ENCODE measurements at regions of chr1 and their contacts with region 1.

Region 1: GRCh38 chr1:51372561-51372960 is 42.2 kb upstream of the TTC39A start:
- DNase-seq: no peak
- H3K4me3 Mint-ChIP-seq: no peak overlapping the region
- H3K27ac Mint-ChIP-seq: no peak overlapping the region
- H3K4me1 Mint-ChIP-seq: no peaks in the 10 kb centered on the region
- H3K27me3 Mint-ChIP-seq: no peaks in the 10 kb centered on the region
- CTCF ChIP-seq: no peak

Region 2: DNA sequence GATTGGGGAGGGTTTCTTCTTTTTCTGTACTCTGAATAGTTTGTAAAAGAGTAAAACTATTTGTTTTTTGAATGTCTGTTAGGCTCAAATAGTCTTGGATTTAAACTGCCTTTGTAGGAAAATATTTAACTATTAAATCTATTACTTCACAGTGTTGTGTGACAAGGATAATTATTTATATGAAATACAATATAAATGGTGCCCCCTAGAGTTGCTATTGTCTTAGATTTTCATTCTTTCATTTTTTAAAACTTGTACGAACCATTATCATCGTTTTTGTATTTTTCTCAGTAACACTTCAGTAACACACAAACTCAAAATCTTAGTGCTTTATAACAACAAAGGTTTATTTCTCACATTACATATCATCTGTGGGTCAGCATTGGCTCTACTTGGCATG is 233.1 kb before region 1 on chr1:
- CTCF ChIA-PET with region 1: no interaction called
- intact Hi-C with region 1: no loop called
- DNase-seq: no peak
- H3K4me3 Mint-ChIP-seq: no peak overlapping the region
- H3K27ac Mint-ChIP-seq: no peak overlapping the region
- H3K4me1 Mint-ChIP-seq: no peaks in the 10 kb centered on the region
- H3K27me3 Mint-ChIP-seq: no peaks in the 10 kb centered on the region
- CTCF ChIP-seq: peak; percentile 13

Region 3: DNA sequence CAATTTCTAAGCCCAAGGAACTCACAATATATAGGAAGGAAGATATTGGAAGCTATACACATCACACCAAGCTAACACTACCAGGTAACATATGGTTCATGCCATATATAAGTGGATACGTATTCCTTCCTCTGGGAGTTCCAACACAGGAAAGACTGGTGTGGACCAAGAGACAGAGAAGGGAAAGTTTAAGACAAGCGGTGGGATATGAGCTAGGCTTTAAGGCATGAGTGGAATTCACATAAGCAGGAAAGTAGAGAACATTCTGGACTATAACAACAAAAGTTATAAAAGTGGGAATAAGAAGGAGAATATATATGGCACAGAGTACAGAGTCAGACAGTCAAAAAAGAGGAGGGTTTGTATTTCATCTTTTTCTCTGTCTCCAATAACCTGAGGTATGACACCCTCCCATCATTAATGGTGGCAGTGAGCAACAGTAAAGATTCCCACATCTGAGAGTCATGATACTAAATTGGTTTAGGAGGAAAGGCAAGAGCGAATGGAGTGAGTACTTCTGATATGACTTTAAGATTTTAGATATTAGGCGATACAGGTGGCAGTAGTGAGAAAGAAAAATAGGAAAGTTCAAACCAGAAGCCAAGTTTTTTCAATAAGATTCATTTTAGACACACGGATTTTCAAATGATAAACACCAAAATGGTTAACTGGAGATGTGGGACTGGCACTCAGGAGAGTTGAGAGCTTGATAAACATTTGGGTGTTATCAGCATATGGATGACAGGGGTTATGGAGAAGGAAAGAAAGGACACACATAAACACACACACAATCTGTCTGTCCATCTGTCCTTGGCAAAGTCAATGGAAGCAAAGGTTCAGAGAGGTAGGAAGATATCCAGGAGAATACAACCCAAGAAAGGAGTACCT is 45.2 kb after region 1 on chr1:
- CTCF ChIA-PET with region 1: no interaction called
- intact Hi-C with region 1: loop called (anchors 2 kb)
- DNase-seq: no peak
- H3K4me3 Mint-ChIP-seq: no peak overlapping the region
- H3K27ac Mint-ChIP-seq: no peak overlapping the region
- H3K4me1 Mint-ChIP-seq: peaks cover 15% of the 10 kb centered on the region
- H3K27me3 Mint-ChIP-seq: no peaks in the 10 kb centered on the region
- CTCF ChIP-seq: no peak

Region 4: DNA sequence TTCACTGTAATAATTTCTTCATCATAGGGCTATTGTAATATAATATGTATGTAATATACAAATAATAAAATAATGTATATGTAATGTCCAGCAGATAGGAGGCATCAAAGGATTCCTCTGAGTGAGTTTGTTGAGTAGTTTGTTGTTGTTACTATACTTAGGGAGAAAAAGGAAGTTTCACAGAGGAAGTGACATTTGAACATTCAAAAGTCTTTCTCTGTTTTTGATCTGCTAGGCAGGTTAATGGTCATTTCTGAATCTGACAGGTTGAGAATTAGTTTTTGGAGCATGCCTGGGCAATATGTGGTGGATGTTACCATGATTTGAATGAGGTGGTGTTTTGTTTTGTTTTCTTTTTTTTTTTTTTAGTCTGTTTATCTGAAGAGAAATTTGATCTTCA is 403.8 kb after region 1 on chr1:
- CTCF ChIA-PET with region 1: no interaction called
- intact Hi-C with region 1: no loop called
- DNase-seq: no peak
- H3K4me3 Mint-ChIP-seq: no peak overlapping the region
- H3K27ac Mint-ChIP-seq: no peak overlapping the region
- H3K4me1 Mint-ChIP-seq: no peaks in the 10 kb centered on the region
- H3K27me3 Mint-ChIP-seq: no peaks in the 10 kb centered on the region
- CTCF ChIP-seq: no peak

Measured in Calu3 (cell line).